ENCODE measurements at regions of chr18 and their contacts with region 1.

Region 1: GRCh38 chr18:32018331-32019250 is at the start of gene RNF125:
- DNase-seq: peak; percentile 82 to 97 (median 91)
- ATAC-seq: peak; percentile 69
- H3K4me3 ChIP-seq: peak within 1 kb of the TSS; percentile 88 to 89
- H3K4me3 Mint-ChIP-seq: peak within 1 kb of the TSS; percentile 99
- H3K27ac ChIP-seq: peak within 1 kb of the TSS; percentile 83 to 99
- H3K27ac Mint-ChIP-seq: peak within 1 kb of the TSS; percentile 99
- H3K4me1 ChIP-seq: peaks cover 43% of the 10 kb centered on the region
- H3K4me1 Mint-ChIP-seq: peaks cover 60% of the 10 kb centered on the region
- H3K27me3 ChIP-seq: no peaks in the 10 kb centered on the region
- H3K27me3 Mint-ChIP-seq: no peaks in the 10 kb centered on the region
- CTCF ChIP-seq: no peak
- total RNA-seq, gene RNF125: 162 to 177 TPM

Region 2: DNA sequence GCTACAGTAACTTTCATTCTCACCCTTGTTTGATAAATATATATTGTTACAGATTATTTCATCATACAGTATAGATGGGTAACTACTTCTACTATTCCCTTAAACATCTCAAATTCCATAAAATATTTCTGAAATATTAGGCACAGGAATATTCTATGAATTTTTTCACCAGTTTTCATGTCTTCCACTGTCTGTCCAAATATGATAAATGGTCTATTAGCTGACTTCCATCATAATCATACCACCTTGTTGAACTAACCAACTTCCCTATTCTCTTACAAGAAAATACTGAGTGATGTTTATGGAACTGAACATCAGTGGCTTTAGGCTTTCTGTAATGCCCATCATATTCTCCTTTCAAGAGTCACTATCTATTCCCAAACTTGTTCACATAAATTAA is 158.1 kb before region 1 on chr18:
- CTCF ChIA-PET with region 1: no interaction called
- POLR2A ChIA-PET with region 1: no interaction called
- intact Hi-C with region 1: no loop called
- DNase-seq: no peak
- ATAC-seq: no peak
- H3K4me3 ChIP-seq: no peak overlapping the region
- H3K4me3 Mint-ChIP-seq: no peak overlapping the region
- H3K27ac ChIP-seq: no peak overlapping the region
- H3K27ac Mint-ChIP-seq: no peak overlapping the region
- H3K4me1 ChIP-seq: no peaks in the 10 kb centered on the region
- H3K4me1 Mint-ChIP-seq: no peaks in the 10 kb centered on the region
- H3K27me3 ChIP-seq: no peaks in the 10 kb centered on the region
- H3K27me3 Mint-ChIP-seq: no peaks in the 10 kb centered on the region
- CTCF ChIP-seq: no peak

Region 3: GRCh38 chr18:31983020-31983419 is 35.6 kb before region 1 on chr18:
- CTCF ChIA-PET with region 1: interaction called, 7 read pairs
- POLR2A ChIA-PET with region 1: interaction called, 8 read pairs
- intact Hi-C with region 1: loop called in 1 of 2 experiments (anchors 5 kb)
- DNase-seq: no peak
- ATAC-seq: no peak
- H3K4me3 ChIP-seq: no peak overlapping the region
- H3K4me3 Mint-ChIP-seq: no peak overlapping the region
- H3K27ac ChIP-seq: no peak overlapping the region
- H3K27ac Mint-ChIP-seq: no peak overlapping the region
- H3K4me1 ChIP-seq: peaks cover 14% of the 10 kb centered on the region
- H3K4me1 Mint-ChIP-seq: peaks cover 20% of the 10 kb centered on the region
- H3K27me3 ChIP-seq: no peaks in the 10 kb centered on the region
- H3K27me3 Mint-ChIP-seq: no peaks in the 10 kb centered on the region
- CTCF ChIP-seq: no peak

Region 4: GRCh38 chr18:32029558-32029957 is 11.0 kb after region 1 on chr18:
- CTCF ChIA-PET with region 1: interaction called, 7 read pairs
- POLR2A ChIA-PET with region 1: interaction called, 13 read pairs
- intact Hi-C with region 1: no loop called
- DNase-seq: no peak
- ATAC-seq: no peak
- H3K4me3 ChIP-seq: no peak overlapping the region
- H3K4me3 Mint-ChIP-seq: peak overlapping the region; percentile 27
- H3K27ac ChIP-seq: no peak overlapping the region
- H3K27ac Mint-ChIP-seq: peak overlapping the region; percentile 24
- H3K4me1 ChIP-seq: peaks cover 69% of the 10 kb centered on the region
- H3K4me1 Mint-ChIP-seq: peaks cover 85% of the 10 kb centered on the region
- H3K27me3 ChIP-seq: no peaks in the 10 kb centered on the region
- H3K27me3 Mint-ChIP-seq: no peaks in the 10 kb centered on the region
- CTCF ChIP-seq: no peak

Region 5: GRCh38 chr18:32048507-32049091 is 30.0 kb after region 1 on chr18:
- CTCF ChIA-PET with region 1: interaction called, 6 read pairs
- POLR2A ChIA-PET with region 1: interaction called, 22 read pairs
- intact Hi-C with region 1: no loop called
- DNase-seq: peak in 2 of 9 experiments; percentile 22 to 46
- ATAC-seq: peak; percentile 25
- H3K4me3 ChIP-seq: no peak overlapping the region
- H3K4me3 Mint-ChIP-seq: peak overlapping the region; percentile 10
- H3K27ac ChIP-seq: peak overlapping the region in 1 of 2 experiments; percentile 66
- H3K27ac Mint-ChIP-seq: peak overlapping the region; percentile 79
- H3K4me1 ChIP-seq: peaks cover 26% of the 10 kb centered on the region
- H3K4me1 Mint-ChIP-seq: peaks cover 37% of the 10 kb centered on the region
- H3K27me3 ChIP-seq: no peaks in the 10 kb centered on the region
- H3K27me3 Mint-ChIP-seq: no peaks in the 10 kb centered on the region
- CTCF ChIP-seq: no peak

Region 6: GRCh38 chr18:32086861-32087260 is 68.3 kb after region 1 on chr18:
- CTCF ChIA-PET with region 1: interaction called, 15 read pairs
- POLR2A ChIA-PET with region 1: interaction called, 82 read pairs
- intact Hi-C with region 1: loop called (anchors 1 kb)
- DNase-seq: no peak
- ATAC-seq: no peak
- H3K4me3 ChIP-seq: no peak overlapping the region
- H3K4me3 Mint-ChIP-seq: no peak overlapping the region
- H3K27ac ChIP-seq: no peak overlapping the region
- H3K27ac Mint-ChIP-seq: no peak overlapping the region
- H3K4me1 ChIP-seq: peaks cover 29% of the 10 kb centered on the region
- H3K4me1 Mint-ChIP-seq: peaks cover 44% of the 10 kb centered on the region
- H3K27me3 ChIP-seq: no peaks in the 10 kb centered on the region
- H3K27me3 Mint-ChIP-seq: no peaks in the 10 kb centered on the region
- CTCF ChIP-seq: no peak

Region 7: DNA sequence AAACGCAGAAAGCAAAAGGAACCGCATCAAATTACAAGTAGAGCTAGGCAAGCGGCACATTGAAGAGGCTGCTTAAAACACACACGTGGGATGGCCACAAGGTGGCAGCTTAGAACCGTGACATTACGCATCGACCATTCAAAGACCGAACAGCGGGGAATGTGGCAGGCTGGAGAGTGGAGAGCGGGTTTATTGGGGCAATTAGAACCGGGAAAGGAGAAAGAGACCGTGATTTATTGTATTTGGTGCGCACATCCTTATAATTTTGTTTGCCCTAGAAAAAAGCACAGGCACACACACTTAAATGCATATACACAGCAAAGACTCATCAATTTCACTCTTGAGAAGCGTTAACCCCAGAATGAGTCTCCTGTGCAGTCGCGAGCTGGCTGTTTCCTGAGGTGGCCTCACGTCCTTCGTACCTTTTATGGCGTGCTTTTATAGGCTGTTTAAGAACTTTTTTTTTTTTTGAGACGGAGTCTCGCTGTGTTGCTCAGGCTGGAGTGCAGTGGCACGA is 139.6 kb after region 1 on chr18:
- CTCF ChIA-PET with region 1: interaction called, 3 read pairs
- POLR2A ChIA-PET with region 1: interaction called, 10 read pairs
- intact Hi-C with region 1: no loop called
- DNase-seq: peak; percentile 46 to 86 (median 69)
- ATAC-seq: peak; percentile 93
- H3K4me3 ChIP-seq: peak overlapping the region; percentile 30 to 34
- H3K4me3 Mint-ChIP-seq: peak overlapping the region; percentile 75
- H3K27ac ChIP-seq: no peak overlapping the region
- H3K27ac Mint-ChIP-seq: no peak overlapping the region
- H3K4me1 ChIP-seq: no peaks in the 10 kb centered on the region
- H3K4me1 Mint-ChIP-seq: peaks cover 6% of the 10 kb centered on the region
- H3K27me3 ChIP-seq: peaks cover 0 to 4% of the 10 kb centered on the region in 2 experiments
- H3K27me3 Mint-ChIP-seq: peaks cover 4% of the 10 kb centered on the region
- CTCF ChIP-seq: peak; percentile 81